CD8-positive, alpha-beta T cell (primary cell): ENCODE measurements at regions of chr1 and their contacts with region 1.

Region 1: GRCh38 chr1:116372587-116373444 is at the start of gene ATP1A1:
- DNase-seq: peak; percentile 93 to 99 (median 98)
- ATAC-seq: peak; percentile 66
- H3K4me3 ChIP-seq: peak within 1 kb of the TSS; percentile 73 to 80
- H3K4me3 Mint-ChIP-seq: peak within 1 kb of the TSS; percentile 96
- H3K27ac ChIP-seq: peak within 1 kb of the TSS; percentile 83 to 92
- H3K27ac Mint-ChIP-seq: peak within 1 kb of the TSS; percentile 97
- H3K4me1 ChIP-seq: peaks cover 35% of the 10 kb centered on the region
- H3K4me1 Mint-ChIP-seq: peaks cover 47% of the 10 kb centered on the region
- H3K27me3 ChIP-seq: no peaks in the 10 kb centered on the region
- H3K27me3 Mint-ChIP-seq: no peaks in the 10 kb centered on the region
- CTCF ChIP-seq: no peak
- total RNA-seq, gene ATP1A1: 204 to 211 TPM

Region 2: DNA sequence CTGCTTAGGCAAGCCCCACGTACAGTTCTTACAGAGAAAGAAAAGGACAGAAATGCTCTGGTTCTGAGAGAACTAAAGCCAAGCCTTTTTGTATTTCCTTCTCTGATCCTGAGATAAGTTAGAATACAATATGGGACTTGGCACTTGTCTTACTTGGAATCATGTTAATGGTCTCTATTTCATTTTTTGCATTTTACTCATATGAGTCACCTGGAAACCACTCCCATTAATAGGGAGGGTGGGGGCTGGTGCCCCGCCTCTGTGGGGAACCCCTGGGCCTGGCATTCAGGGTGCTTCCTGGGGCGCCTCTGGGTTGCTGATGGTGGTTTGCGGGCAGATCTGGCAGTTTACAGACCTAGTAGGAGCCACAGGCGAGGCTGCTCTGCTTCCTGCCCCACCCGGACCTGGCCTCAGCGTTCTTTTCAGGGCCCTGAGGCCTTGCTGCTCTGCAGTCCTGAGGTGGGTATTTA is 1310.2 kb before region 1 on chr1:
- CTCF ChIA-PET with region 1: no interaction called
- POLR2A ChIA-PET with region 1: no interaction called
- intact Hi-C with region 1: loop called in 1 of 2 experiments (anchors 10 kb)
- DNase-seq: peak; percentile 91 to 99 (median 94)
- ATAC-seq: peak; percentile 89
- H3K4me3 ChIP-seq: peak overlapping the region in 1 of 2 experiments; percentile 17
- H3K4me3 Mint-ChIP-seq: peak overlapping the region; percentile 79
- H3K27ac ChIP-seq: peak overlapping the region; percentile 74 to 93
- H3K27ac Mint-ChIP-seq: peak overlapping the region; percentile 100
- H3K4me1 ChIP-seq: peaks cover 35% of the 10 kb centered on the region
- H3K4me1 Mint-ChIP-seq: peaks cover 43% of the 10 kb centered on the region
- H3K27me3 ChIP-seq: no peaks in the 10 kb centered on the region
- H3K27me3 Mint-ChIP-seq: no peaks in the 10 kb centered on the region
- CTCF ChIP-seq: no peak

Region 3: DNA sequence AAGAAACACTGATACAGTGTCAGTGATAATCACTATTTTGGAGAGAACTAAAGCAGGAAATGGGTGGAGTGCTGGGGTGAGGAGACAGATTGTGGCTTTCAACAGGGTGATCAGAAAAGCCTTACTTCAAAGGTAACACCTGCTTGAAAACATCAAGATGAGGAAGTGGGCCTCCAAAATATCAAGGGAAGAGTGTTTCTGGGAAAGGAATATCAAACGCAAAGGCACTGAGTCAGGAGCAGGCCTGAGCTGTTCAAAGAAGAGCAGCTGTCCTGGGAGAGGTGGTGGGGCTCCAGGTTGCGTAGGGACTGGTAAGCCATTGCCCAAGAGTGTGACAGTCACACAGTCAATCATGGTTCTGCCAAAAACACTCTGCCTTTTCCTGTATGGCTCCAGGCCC is 46.9 kb before region 1 on chr1:
- CTCF ChIA-PET with region 1: no interaction called
- POLR2A ChIA-PET with region 1: interaction called, 14 read pairs
- intact Hi-C with region 1: loop called (anchors 1 to 5 kb)
- DNase-seq: peak in 8 of 9 experiments; percentile 8 to 78 (median 58)
- ATAC-seq: peak; percentile 85
- H3K4me3 ChIP-seq: peak overlapping the region; percentile 3 to 34
- H3K4me3 Mint-ChIP-seq: peak overlapping the region; percentile 70
- H3K27ac ChIP-seq: peak overlapping the region; percentile 55 to 78
- H3K27ac Mint-ChIP-seq: peak overlapping the region; percentile 95
- H3K4me1 ChIP-seq: peaks cover 84% of the 10 kb centered on the region
- H3K4me1 Mint-ChIP-seq: peaks cover 90% of the 10 kb centered on the region
- H3K27me3 ChIP-seq: no peaks in the 10 kb centered on the region
- H3K27me3 Mint-ChIP-seq: no peaks in the 10 kb centered on the region
- CTCF ChIP-seq: no peak

Region 4: GRCh38 chr1:116418091-116418830 is 45.4 kb after region 1 on chr1:
- CTCF ChIA-PET with region 1: no interaction called
- POLR2A ChIA-PET with region 1: interaction called, 40 read pairs
- intact Hi-C with region 1: loop called (anchors 1 to 2 kb)
- DNase-seq: peak; percentile 79 to 93 (median 87)
- ATAC-seq: peak; percentile 98
- H3K4me3 ChIP-seq: peak overlapping the region; percentile 81 to 83
- H3K4me3 Mint-ChIP-seq: peak overlapping the region; percentile 89
- H3K27ac ChIP-seq: peak overlapping the region; percentile 78 to 80
- H3K27ac Mint-ChIP-seq: peak overlapping the region; percentile 96
- H3K4me1 ChIP-seq: peaks cover 29% of the 10 kb centered on the region
- H3K4me1 Mint-ChIP-seq: peaks cover 35% of the 10 kb centered on the region
- H3K27me3 ChIP-seq: no peaks in the 10 kb centered on the region
- H3K27me3 Mint-ChIP-seq: no peaks in the 10 kb centered on the region
- CTCF ChIP-seq: no peak

Region 5: DNA sequence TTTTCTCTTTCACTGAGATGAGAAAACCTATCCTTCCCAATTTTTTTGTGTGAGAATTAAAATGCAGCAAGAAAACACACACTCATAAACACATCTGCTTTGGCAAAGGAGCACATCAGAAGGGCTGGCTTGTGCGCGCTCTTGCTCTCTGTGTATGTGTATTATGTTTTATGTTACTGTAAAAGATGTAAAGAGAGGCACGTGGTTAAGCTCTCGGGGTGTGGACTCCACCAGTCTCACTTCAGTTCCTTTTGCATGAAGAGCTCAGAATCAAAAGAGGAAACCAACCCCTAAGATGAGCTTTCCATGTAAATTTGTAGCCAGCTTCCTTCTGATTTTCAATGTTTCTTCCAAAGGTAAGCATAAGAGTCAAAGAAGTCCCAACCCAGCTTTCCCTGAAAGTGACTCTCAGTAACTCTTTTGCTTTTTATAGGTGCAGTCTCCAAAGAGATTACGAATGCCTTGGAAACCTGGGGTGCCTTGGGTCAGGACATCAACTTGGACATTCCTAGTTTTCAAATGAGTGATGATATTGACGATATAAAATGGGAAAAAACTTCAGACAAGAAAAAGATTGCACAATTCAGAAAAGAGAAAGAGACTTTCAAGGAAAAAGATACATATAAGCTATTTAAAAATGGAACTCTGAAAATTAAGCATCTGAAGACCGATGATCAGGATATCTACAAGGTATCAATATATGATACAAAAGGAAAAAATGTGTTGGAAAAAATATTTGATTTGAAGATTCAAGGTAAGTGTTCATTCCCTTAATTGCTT is 381.6 kb after region 1 on chr1 and contains the start of gene CD2:
- CTCF ChIA-PET with region 1: no interaction called
- POLR2A ChIA-PET with region 1: no interaction called
- intact Hi-C with region 1: loop called in 1 of 2 experiments (anchors 10 kb)
- DNase-seq: peak in 6 of 9 experiments; percentile 43 to 80 (median 60)
- ATAC-seq: peak; percentile 83
- H3K4me3 ChIP-seq: peak within 1 kb of the TSS; percentile 71 to 84
- H3K4me3 Mint-ChIP-seq: peak within 1 kb of the TSS; percentile 93
- H3K27ac ChIP-seq: peak within 1 kb of the TSS; percentile 70 to 87
- H3K27ac Mint-ChIP-seq: peak within 1 kb of the TSS; percentile 99
- H3K4me1 ChIP-seq: peaks cover 23% of the 10 kb centered on the region
- H3K4me1 Mint-ChIP-seq: peaks cover 40% of the 10 kb centered on the region
- H3K27me3 ChIP-seq: no peaks in the 10 kb centered on the region
- H3K27me3 Mint-ChIP-seq: no peaks in the 10 kb centered on the region
- CTCF ChIP-seq: no peak
- total RNA-seq, gene CD2: 97.8 to 102 TPM

Region 6: GRCh38 chr1:117664314-117664713 is 1291.5 kb after region 1 on chr1:
- CTCF ChIA-PET with region 1: no interaction called
- POLR2A ChIA-PET with region 1: no interaction called
- intact Hi-C with region 1: loop called (anchors 10 kb)
- DNase-seq: peak in 7 of 9 experiments; percentile 30 to 96 (median 59)
- ATAC-seq: peak; percentile 77
- H3K4me3 ChIP-seq: no peak overlapping the region
- H3K4me3 Mint-ChIP-seq: no peak overlapping the region
- H3K27ac ChIP-seq: peak overlapping the region; percentile 44 to 84
- H3K27ac Mint-ChIP-seq: peak overlapping the region; percentile 85
- H3K4me1 ChIP-seq: peaks cover 53% of the 10 kb centered on the region
- H3K4me1 Mint-ChIP-seq: peaks cover 72% of the 10 kb centered on the region
- H3K27me3 ChIP-seq: no peaks in the 10 kb centered on the region
- H3K27me3 Mint-ChIP-seq: peaks cover 17% of the 10 kb centered on the region
- CTCF ChIP-seq: no peak